ENCODE measurements at regions of chr10 and their contacts with region 1.

Region 1: DNA sequence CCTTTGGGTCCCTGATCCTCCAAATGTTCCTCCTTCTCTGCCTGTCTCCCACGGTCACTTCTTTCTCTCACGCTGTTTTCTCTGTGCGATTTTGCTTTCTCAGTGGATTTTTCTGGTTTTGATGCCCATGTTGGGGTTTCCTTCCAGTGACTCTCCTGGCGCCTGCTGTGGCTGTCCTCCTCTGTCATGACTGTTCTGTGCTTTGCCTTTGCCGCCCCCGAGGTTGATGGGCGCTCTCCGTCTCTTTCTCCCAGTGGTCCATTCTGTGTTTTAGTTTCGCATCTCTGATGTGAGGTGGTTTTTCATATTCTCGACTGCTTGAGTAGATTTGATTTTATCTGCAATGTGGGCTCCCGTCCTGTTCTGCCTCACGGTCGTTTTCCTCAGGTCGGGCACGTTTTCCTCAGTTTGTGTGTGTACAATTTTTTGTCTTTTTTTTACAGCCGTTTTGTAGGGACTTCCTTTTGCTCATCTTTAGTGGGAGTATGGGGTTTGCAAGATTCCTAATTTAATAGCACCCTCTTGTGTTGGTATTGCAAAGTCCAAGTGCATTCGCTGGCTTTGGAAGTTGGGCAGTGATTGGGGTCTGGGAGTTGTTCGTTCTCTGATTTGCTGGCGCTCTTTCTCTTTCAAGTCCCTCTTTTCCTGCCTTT is 100.0 kb downstream of the INPP5A start:
- DNase-seq: peak; percentile 68
- H3K4me3 ChIP-seq: no peak overlapping the region
- H3K27ac ChIP-seq: no peak overlapping the region
- H3K4me1 ChIP-seq: peaks cover 2% of the 10 kb centered on the region
- H3K27me3 ChIP-seq: no peaks in the 10 kb centered on the region
- CTCF ChIP-seq: peak; percentile 60 to 66
- POLR2A ChIP-seq: no peak

Region 2: DNA sequence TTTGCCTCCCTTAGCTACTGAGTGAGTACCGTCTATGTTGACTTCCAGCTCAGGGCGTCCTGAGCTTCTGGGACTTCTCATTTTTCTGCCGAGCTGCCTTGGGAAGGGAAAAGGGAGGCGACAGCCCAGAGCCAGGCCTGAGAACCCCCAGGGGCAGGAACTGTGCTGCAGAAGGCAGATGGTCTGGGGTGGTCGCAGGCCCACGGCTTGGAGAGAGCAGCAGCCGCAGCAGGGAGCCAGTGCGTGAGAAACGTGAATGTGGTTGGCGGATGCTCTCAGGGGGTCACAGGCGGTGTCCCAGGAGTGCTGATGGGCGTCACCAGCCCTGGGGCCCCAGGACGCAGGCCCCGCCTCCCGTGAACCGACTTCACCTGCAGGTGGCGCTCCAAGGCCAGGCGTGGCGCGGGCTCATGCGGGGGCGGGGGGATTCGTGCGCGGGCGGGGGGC is 249.8 kb before region 1 on chr10:
- CTCF ChIA-PET with region 1: no interaction called
- POLR2A ChIA-PET with region 1: no interaction called
- dilution Hi-C with region 1: no loop called
- intact Hi-C with region 1: loop called (anchors 5 kb)
- DNase-seq: peak; percentile 28
- H3K4me3 ChIP-seq: no peak overlapping the region
- H3K27ac ChIP-seq: no peak overlapping the region
- H3K4me1 ChIP-seq: no peaks in the 10 kb centered on the region
- H3K27me3 ChIP-seq: no peaks in the 10 kb centered on the region
- CTCF ChIP-seq: peak; percentile 40 to 79
- POLR2A ChIP-seq: no peak

Region 3: GRCh38 chr10:132516771-132517725 is 120.6 kb before region 1 on chr10:
- CTCF ChIA-PET with region 1: interaction called, 3 read pairs
- POLR2A ChIA-PET with region 1: no interaction called
- dilution Hi-C with region 1: no loop called
- intact Hi-C with region 1: loop called (anchors 1 kb)
- DNase-seq: peak; percentile 71
- H3K4me3 ChIP-seq: no peak overlapping the region
- H3K27ac ChIP-seq: peak overlapping the region; percentile 52
- H3K4me1 ChIP-seq: peaks cover 11% of the 10 kb centered on the region
- H3K27me3 ChIP-seq: no peaks in the 10 kb centered on the region
- CTCF ChIP-seq: no peak
- POLR2A ChIP-seq: no peak

Region 4: DNA sequence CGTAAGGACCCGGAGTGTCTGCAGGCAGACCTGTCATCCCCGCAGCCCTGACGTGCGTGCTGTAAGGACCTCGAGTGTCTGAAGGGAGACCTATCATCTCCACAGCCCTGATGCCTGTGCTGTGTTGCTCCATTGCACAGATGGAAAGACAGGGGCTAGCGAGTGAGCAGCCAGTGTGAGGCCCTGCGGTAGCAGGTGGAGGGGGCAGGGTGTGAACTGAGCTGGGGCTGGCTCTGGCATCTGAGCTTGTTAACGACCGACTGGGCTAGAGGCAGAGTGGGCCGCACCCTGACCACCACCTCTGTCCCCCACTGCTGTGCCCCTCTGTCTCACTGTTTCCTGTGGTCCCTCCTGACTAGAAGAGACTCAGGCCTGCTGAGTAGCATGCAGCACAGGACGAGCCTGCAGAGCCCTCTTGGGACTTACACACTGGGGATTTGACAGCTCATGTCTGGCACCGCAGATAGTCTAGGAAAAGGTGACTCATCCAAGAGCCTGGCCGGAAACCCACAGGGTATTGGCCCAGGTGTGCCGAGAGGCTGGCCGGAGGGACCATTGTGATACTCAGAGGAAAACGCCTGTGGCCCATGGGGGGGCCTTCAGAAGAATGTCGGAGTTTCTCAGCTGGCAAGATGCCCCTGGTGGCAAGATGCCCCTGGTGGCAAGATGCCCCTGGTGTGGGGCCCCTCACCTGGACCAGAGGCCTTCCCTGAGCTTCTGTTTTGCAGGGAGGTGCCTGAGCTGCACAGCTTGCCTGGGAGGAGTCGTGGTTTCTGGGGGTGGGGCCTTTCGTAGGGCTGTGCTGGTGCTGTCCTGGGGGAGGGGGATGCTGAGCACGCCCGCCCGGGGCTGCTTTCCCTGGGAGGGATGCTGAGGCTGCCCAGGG is 65.7 kb before region 1 on chr10:
- CTCF ChIA-PET with region 1: interaction called, 4 read pairs
- POLR2A ChIA-PET with region 1: no interaction called
- dilution Hi-C with region 1: no loop called
- intact Hi-C with region 1: loop called (anchors 2 kb)
- DNase-seq: peak; percentile 75
- H3K4me3 ChIP-seq: no peak overlapping the region
- H3K27ac ChIP-seq: no peak overlapping the region
- H3K4me1 ChIP-seq: peaks cover 27% of the 10 kb centered on the region
- H3K27me3 ChIP-seq: no peaks in the 10 kb centered on the region
- CTCF ChIP-seq: peak; percentile 4
- POLR2A ChIP-seq: no peak

Region 5: GRCh38 chr10:132904181-132904819 is 266.7 kb after region 1 on chr10:
- CTCF ChIA-PET with region 1: no interaction called
- POLR2A ChIA-PET with region 1: interaction called, 11 read pairs
- dilution Hi-C with region 1: no loop called
- intact Hi-C with region 1: no loop called
- DNase-seq: peak; percentile 33
- H3K4me3 ChIP-seq: no peak overlapping the region
- H3K27ac ChIP-seq: no peak overlapping the region
- H3K4me1 ChIP-seq: no peaks in the 10 kb centered on the region
- H3K27me3 ChIP-seq: no peaks in the 10 kb centered on the region
- CTCF ChIP-seq: peak; percentile 76 to 81
- POLR2A ChIP-seq: no peak